ENCODE measurements at regions of chr19 and their contacts with region 1.

Region 1: GRCh38 chr19:6048808-6049405 is 61.4 kb downstream of the RFX2 start:
- DNase-seq: no peak
- H3K4me3 ChIP-seq: no peak overlapping the region
- H3K27me3 ChIP-seq: no peaks in the 10 kb centered on the region
- CTCF ChIP-seq: peak; percentile 92

Region 2: GRCh38 chr19:6032827-6033226 is 16.1 kb before region 1 on chr19:
- CTCF ChIA-PET with region 1: interaction called, 13 read pairs
- POLR2A ChIA-PET with region 1: no interaction called
- DNase-seq: no peak
- H3K4me3 ChIP-seq: no peak overlapping the region
- H3K27me3 ChIP-seq: no peaks in the 10 kb centered on the region
- CTCF ChIP-seq: no peak

Region 3: GRCh38 chr19:6116749-6117430 is 68.0 kb after region 1 on chr19:
- CTCF ChIA-PET with region 1: interaction called, 94 read pairs
- POLR2A ChIA-PET with region 1: no interaction called
- DNase-seq: no peak
- H3K4me3 ChIP-seq: no peak overlapping the region
- H3K27me3 ChIP-seq: no peaks in the 10 kb centered on the region
- CTCF ChIP-seq: no peak

Region 4: GRCh38 chr19:6164906-6165531 is 116.1 kb after region 1 on chr19:
- CTCF ChIA-PET with region 1: no interaction called
- POLR2A ChIA-PET with region 1: no interaction called
- DNase-seq: no peak
- H3K4me3 ChIP-seq: no peak overlapping the region
- H3K27me3 ChIP-seq: no peaks in the 10 kb centered on the region
- CTCF ChIP-seq: no peak

Region 5: DNA sequence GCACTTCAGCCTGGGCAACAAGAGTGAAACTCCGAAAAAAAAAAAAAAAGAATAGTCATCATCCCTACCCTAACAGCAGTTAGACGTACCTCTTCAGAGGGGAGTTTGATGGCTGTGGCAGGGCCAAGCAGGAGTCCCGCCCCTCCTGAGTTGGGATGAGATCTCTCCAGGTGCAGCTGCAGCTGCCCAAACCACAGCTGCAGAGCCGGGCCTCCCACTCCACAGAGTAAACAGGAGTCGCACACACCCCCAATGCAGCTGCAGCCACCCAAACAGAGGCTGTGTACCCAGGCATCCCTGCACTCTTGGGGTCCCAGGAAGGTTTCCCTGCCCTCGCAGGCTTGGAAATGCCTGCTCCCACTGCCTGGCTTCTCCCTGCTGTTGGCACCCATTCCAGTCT is 248.3 kb after region 1 on chr19:
- CTCF ChIA-PET with region 1: interaction called, 12 read pairs
- POLR2A ChIA-PET with region 1: no interaction called
- DNase-seq: no peak
- H3K4me3 ChIP-seq: no peak overlapping the region
- H3K27me3 ChIP-seq: 0 out of 2 replicates have a peak, but pooled peaks cover 2% of the 10 kb centered on the region
- CTCF ChIP-seq: no peak